ENCODE measurements at regions of chr2 and their contacts with region 1.

Region 1: GRCh38 chr2:170973492-170974303 is 44.6 kb downstream of the GORASP2 start:
- DNase-seq: peak; percentile 66
- ATAC-seq: peak; percentile 96
- H3K4me3 ChIP-seq: peak overlapping the region; percentile 86
- H3K27ac ChIP-seq: peak overlapping the region; percentile 84
- H3K4me1 ChIP-seq: peaks cover 4% of the 10 kb centered on the region
- H3K27me3 ChIP-seq: no peaks in the 10 kb centered on the region; the same call in 1 of the 2 replicates
- CTCF ChIP-seq: peak; percentile 97
- POLR2A ChIP-seq: peak; percentile 45; the same call in 1 of the 2 replicates
- RAD21 ChIP-seq: peak; percentile 95

Region 2: DNA sequence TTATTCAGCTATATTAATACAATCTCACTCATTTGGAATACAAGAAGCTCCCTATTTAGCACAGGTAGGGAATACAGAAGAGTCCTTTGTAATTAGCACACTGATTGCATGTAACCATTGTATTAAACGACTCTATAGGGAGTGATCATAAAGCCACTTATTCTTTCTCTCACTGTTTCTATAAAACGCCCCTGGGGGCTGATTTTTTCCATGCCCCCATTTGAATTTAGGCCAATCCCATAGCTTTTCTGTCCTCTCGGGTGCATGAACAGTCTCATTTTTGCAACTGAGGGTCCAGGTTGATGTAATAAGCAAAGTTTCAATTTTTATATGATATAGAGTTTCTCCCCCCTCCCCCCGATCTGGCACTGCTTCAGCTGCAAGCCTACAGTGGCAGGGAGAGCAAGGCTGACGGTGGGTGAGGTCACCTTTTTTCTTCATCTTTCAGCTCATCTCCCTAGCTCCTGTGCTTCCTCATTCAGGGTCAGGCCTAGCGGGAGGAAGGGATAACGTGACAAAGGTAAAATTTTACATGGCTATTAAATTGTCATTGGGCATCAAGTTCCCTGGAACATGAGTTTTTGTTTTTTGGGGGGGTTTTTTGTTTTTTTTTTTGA is 111.3 kb before region 1 on chr2:
- CTCF ChIA-PET with region 1: no interaction called
- POLR2A ChIA-PET with region 1: no interaction called
- dilution Hi-C with region 1: no loop called
- in situ Hi-C with region 1: no loop called
- intact Hi-C with region 1: no loop called
- DNase-seq: no peak
- ATAC-seq: no peak
- H3K4me3 ChIP-seq: no peak overlapping the region
- H3K27ac ChIP-seq: no peak overlapping the region
- H3K4me1 ChIP-seq: no peaks in the 10 kb centered on the region
- H3K27me3 ChIP-seq: no peaks in the 10 kb centered on the region
- CTCF ChIP-seq: no peak
- POLR2A ChIP-seq: no peak
- RAD21 ChIP-seq: no peak

Region 3: DNA sequence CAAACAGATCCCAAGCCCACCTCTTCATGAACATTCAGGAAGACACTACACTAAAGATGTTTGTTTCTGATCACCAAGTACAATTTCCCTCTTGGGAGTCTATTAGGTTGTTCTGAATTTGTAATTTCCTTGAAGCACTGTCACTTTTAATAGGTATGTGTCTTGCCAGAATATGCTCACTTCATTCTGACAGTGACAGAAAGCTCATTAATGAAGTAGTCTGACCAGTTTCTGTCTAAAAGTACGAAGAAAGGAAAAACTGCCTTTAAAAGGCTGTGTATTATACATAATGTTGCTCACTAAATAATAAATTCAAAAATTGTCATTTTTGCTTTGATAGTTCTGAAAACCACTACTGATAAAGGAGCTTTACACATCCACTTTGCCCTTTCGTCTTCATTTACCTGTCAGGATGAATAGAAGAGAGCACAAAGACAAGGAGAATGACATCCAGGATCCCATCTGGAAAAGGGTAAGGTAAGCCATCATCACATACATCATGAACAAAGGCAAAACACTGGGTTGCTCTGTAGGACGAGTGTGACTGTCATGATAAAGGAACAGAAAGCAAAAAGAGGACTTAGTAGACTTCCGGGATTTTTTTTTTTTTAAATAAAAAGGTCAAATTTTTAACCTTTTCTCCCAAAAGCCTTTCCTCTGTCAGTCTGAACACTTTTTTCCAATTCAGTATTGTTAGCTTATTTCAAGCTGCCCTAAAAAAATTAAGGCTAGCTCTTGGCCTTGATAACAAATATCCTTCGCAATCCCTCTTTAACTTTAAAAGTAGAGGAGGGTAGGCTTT is 356.7 kb after region 1 on chr2:
- CTCF ChIA-PET with region 1: no interaction called
- POLR2A ChIA-PET with region 1: no interaction called
- dilution Hi-C with region 1: no loop called
- in situ Hi-C with region 1: no loop called
- intact Hi-C with region 1: loop called (anchors 10 kb)
- DNase-seq: no peak
- ATAC-seq: no peak
- H3K4me3 ChIP-seq: no peak overlapping the region
- H3K27ac ChIP-seq: no peak overlapping the region
- H3K4me1 ChIP-seq: peaks cover 3% of the 10 kb centered on the region; the same call in 1 of the 2 replicates
- H3K27me3 ChIP-seq: no peaks in the 10 kb centered on the region
- CTCF ChIP-seq: no peak
- POLR2A ChIP-seq: no peak
- RAD21 ChIP-seq: no peak

Region 4: DNA sequence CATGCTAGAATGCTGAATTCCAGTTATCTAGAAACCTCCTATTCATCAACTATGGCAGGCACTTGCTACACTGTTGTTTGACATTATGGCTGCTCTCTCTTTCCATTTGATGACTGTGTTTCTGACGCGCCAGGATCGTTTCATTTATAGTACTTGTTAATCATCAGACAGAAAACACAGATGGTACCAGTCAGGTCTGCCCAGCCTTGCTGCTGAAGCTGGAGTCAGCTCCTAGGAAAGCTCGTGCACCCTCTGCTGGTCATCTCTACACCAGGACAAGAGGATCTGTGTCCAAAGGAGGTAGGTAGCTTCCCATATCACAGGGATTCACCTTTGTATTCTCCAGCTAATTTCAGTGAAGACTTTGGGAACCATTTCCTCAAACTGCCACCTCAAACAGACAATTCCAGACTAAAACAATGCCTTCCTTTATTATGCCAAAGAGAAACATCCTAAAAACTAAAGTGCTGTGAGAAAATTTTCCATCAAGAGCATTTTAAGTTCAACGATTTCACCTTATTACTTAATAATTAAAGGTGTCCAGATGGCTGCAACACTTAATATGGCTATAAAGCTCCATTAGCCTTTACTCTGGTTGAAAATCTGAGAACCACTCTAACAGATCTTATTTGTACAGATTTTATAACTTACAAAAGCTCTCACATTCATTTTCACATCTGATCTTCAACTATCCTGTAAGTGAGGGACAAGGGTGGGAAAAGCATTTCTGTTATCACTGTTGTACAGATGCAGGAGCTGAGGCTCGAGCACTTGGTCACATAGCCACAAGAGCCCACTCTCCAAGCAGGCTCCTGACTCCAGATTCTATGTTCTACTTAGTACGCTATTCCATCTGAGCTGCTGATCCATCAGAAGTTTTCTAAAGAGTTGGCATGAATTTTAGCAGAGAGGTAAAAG is 442.6 kb after region 1 on chr2:
- CTCF ChIA-PET with region 1: interaction called, 11 read pairs
- POLR2A ChIA-PET with region 1: no interaction called
- dilution Hi-C with region 1: no loop called
- in situ Hi-C with region 1: loop called (anchors 5 kb)
- intact Hi-C with region 1: loop called (anchors 1 kb)
- DNase-seq: peak; percentile 98
- ATAC-seq: peak; percentile 94
- H3K4me3 ChIP-seq: no peak overlapping the region; the same call in 1 of the 2 replicates
- H3K27ac ChIP-seq: no peak overlapping the region
- H3K4me1 ChIP-seq: peaks cover 7% of the 10 kb centered on the region
- H3K27me3 ChIP-seq: no peaks in the 10 kb centered on the region
- CTCF ChIP-seq: peak; percentile 91
- POLR2A ChIP-seq: peak; percentile 54; the same call in 1 of the 2 replicates
- RAD21 ChIP-seq: peak; percentile 98

Region 5: GRCh38 chr2:171433763-171434670 is 460.3 kb after region 1 on chr2 and contains the starts of genes DCAF17 and METTL8:
- CTCF ChIA-PET with region 1: no interaction called
- POLR2A ChIA-PET with region 1: no interaction called
- dilution Hi-C with region 1: no loop called
- in situ Hi-C with region 1: no loop called
- intact Hi-C with region 1: loop called (anchors 1 kb)
- DNase-seq: peak; percentile 94
- ATAC-seq: peak; percentile 98
- H3K4me3 ChIP-seq: peak within 1 kb of the TSS; percentile 93
- H3K27ac ChIP-seq: peak within 1 kb of the TSS; percentile 81
- H3K4me1 ChIP-seq: peaks cover 9% of the 10 kb centered on the region
- H3K27me3 ChIP-seq: no peaks in the 10 kb centered on the region
- CTCF ChIP-seq: 0 out of 2 replicates have a peak, but pooled peaks have one; percentile 5
- POLR2A ChIP-seq: peak; percentile 55; the same call in 1 of the 2 replicates
- RAD21 ChIP-seq: no peak
- total RNA-seq, gene DCAF17: 13.1 and 22.8 TPM in 2 replicates
- total RNA-seq, gene METTL8: 10.6 and 20.0 TPM in 2 replicates

Region 6: GRCh38 chr2:171522052-171522787 is 548.5 kb after region 1 on chr2 and contains the start of gene CYBRD1:
- CTCF ChIA-PET with region 1: no interaction called
- POLR2A ChIA-PET with region 1: no interaction called
- dilution Hi-C with region 1: no loop called
- in situ Hi-C with region 1: no loop called
- intact Hi-C with region 1: loop called (anchors 10 kb)
- DNase-seq: peak; percentile 79
- ATAC-seq: peak; percentile 76
- H3K4me3 ChIP-seq: peak within 1 kb of the TSS; percentile 96
- H3K27ac ChIP-seq: peak within 1 kb of the TSS; percentile 88
- H3K4me1 ChIP-seq: peaks cover 7% of the 10 kb centered on the region
- H3K27me3 ChIP-seq: no peaks in the 10 kb centered on the region
- CTCF ChIP-seq: peak; percentile 8; the same call in 1 of the 2 replicates
- POLR2A ChIP-seq: peak; percentile 51; the same call in 1 of the 2 replicates
- RAD21 ChIP-seq: no peak
- total RNA-seq, gene CYBRD1: 103 and 119 TPM in 2 replicates

Region 7: DNA sequence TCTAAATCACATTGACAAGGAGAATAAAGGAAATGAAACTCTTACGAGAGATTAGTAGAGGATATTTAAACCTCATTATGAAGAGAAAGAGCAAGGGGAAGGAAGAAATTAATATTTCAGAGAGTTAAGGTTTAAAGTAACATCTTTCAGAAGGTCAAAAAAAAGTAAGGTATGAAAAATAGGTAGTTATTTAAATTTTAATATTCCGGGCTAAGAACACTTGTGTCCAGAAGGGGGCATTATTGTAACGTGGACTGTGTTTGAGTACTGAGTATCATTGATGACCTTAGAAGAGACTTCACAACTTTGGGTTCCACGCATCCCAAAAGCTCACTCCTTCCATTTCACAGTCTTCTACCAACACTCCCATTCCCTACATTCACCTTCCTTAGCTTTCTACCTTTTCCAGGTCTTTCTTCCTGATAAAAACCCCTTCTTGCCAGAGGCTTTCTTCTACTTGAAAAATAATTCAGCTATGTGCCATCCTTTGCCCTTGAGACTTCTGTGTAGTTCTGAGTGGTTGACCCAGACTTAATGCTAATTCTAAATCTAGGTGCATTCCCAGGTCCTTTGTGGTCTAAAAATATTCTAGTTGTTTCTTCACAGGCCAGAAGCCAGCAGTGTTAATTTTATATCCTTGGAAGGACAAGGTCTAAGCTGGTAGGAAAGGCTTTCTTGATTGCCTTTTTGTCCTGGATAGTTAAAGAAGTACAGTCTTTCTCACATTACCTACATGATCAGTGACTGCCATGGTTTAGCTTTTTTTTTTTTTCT is 730.1 kb after region 1 on chr2:
- CTCF ChIA-PET with region 1: no interaction called
- POLR2A ChIA-PET with region 1: no interaction called
- dilution Hi-C with region 1: no loop called
- in situ Hi-C with region 1: no loop called
- intact Hi-C with region 1: loop called (anchors 10 kb)
- DNase-seq: peak; percentile 56
- ATAC-seq: peak; percentile 68
- H3K4me3 ChIP-seq: no peak overlapping the region
- H3K27ac ChIP-seq: no peak overlapping the region
- H3K4me1 ChIP-seq: peaks cover 5% of the 10 kb centered on the region
- H3K27me3 ChIP-seq: no peaks in the 10 kb centered on the region
- CTCF ChIP-seq: peak; percentile 66
- POLR2A ChIP-seq: no peak
- RAD21 ChIP-seq: peak; percentile 72

Measured in IMR-90 (cell line).